CD8-positive, alpha-beta T cell (primary cell): ENCODE measurements at regions of chr19 and their contacts with region 1.

Region 1: DNA sequence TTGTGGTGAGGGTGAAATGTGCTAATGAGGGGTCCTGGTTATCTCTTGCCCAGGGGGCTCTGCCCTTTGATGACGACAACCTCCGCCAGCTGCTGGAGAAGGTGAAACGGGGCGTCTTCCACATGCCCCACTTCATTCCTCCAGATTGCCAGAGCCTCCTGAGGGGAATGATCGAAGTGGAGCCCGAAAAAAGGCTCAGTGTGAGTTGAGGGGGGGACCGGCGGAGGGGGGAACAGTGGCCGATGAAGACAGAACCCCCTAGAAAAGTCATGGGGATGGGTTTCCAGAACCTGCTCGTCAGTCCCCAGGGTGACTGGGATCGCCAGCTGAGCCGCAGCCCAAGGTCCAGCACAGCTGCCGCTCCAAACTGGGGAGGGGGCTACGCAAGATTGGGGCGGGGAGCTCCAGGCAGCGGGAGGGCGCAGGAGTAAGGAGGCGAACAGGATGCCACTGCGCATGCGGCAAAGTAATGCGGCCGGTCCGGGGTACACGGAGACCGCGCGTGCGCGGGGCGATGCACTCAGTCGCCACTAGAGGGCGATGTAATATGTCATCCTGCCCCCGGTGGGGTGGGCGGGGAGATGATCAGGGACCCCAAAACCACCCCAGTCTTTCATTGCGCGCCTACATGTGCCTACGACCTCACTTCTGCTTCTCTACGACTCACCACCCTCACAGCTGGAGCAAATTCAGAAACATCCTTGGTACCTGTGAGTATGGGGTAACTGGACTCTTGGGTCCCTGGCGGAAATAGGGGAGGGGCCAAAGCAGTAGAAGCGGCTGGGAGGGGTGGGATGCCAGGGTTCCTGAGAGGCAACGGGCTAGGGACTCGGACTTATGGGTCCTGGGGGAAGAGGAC is 17.9 kb downstream of the BRSK1 start:
- DNase-seq: peak; percentile 89 to 99 (median 94)
- ATAC-seq: peak; percentile 88
- H3K4me3 ChIP-seq: peak overlapping the region; percentile 46 to 83
- H3K4me3 Mint-ChIP-seq: peak overlapping the region; percentile 85
- H3K27ac ChIP-seq: peak overlapping the region; percentile 48 to 54
- H3K27ac Mint-ChIP-seq: peak overlapping the region; percentile 92
- H3K4me1 ChIP-seq: peaks cover 11% of the 10 kb centered on the region
- H3K4me1 Mint-ChIP-seq: peaks cover 12% of the 10 kb centered on the region
- H3K27me3 ChIP-seq: no peaks in the 10 kb centered on the region
- H3K27me3 Mint-ChIP-seq: no peaks in the 10 kb centered on the region
- CTCF ChIP-seq: peak; percentile 89

Region 2: DNA sequence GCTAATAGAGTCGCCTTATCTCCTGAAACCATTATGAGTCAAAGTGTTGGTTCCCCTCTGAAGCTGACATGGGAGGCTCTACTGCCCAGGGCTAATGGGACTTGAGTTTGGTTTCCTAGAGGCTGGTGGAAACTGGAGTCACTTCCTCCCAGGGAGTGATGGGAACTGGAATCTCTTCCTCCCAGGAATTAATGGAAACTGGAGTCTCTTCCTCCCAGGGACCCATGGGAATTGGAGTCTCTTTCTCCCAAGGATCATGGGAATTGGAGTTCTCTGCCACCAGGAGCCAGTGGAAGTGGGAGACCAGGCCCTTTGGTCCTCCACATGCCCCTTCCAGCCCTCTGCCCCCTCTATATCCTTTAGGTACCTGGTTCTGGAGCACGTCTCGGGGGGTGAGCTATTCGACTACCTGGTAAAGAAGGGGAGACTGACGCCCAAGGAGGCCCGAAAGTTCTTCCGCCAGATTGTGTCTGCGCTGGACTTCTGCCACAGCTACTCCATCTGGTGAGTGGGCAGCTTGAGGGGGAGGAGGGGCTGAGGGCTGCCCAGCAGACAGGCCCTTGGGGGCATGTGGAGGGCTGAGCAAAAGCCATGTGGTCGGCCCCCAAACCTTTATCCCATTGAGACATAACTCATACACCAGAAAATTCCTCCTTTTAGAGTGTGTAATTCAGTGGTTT is 12.4 kb before region 1 on chr19:
- CTCF ChIA-PET with region 1: interaction called, 32 read pairs
- POLR2A ChIA-PET with region 1: no interaction called
- intact Hi-C with region 1: no loop called
- DNase-seq: no peak
- ATAC-seq: no peak
- H3K4me3 ChIP-seq: no peak overlapping the region
- H3K4me3 Mint-ChIP-seq: no peak overlapping the region
- H3K27ac ChIP-seq: no peak overlapping the region
- H3K27ac Mint-ChIP-seq: no peak overlapping the region
- H3K4me1 ChIP-seq: peaks cover 4% of the 10 kb centered on the region
- H3K4me1 Mint-ChIP-seq: peaks cover 6% of the 10 kb centered on the region
- H3K27me3 ChIP-seq: no peaks in the 10 kb centered on the region
- H3K27me3 Mint-ChIP-seq: no peaks in the 10 kb centered on the region
- CTCF ChIP-seq: no peak

Region 3: DNA sequence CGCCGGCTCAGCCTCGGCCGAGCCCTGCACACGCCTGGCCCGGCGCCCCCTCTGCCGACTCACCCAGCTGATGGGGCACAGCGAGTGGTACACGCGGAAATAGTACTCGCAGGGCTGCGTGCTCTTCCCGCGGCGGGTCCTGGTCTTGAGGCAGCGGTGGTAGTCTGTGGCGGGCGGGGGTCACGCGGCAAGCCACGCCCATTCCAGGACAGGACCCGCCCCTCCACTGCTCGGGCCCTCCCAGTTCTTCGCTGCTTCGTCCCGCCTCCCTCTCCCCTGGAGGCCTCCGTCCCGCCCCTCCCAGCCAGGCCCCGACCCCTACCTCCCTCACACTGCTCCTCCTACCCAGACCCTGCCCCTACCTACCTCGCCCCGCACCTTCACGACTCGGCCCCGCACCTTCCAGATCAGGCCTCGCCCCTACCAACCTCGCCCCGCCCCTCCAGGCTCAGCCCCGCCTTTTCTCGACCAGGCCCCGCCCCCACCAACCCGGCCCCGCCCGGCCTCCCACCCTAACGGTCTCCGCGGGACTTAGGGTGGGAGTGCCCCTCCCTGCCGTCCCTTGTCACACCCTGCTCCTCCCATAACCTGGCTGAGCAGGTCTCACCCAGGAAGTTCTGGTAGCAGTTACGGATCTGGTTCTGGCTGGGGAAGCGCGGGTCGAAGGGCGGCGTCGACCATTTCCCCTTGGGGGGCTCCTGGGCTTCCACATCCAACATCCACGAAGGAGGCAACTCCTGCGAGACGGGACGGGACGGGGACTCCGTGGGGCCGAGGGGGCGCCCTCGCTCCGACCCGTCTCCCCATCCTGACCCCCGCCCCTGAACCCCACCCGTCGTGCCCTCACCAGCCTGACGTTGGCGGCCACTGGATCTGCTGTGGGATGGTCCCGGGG is 52.4 kb after region 1 on chr19:
- CTCF ChIA-PET with region 1: interaction called, 6 read pairs
- POLR2A ChIA-PET with region 1: no interaction called
- intact Hi-C with region 1: loop called (anchors 1 to 5 kb)
- DNase-seq: peak; percentile 27 to 83 (median 65)
- ATAC-seq: peak; percentile 89
- H3K4me3 ChIP-seq: peak overlapping the region; percentile 32 to 48
- H3K4me3 Mint-ChIP-seq: peak overlapping the region; percentile 75
- H3K27ac ChIP-seq: no peak overlapping the region
- H3K27ac Mint-ChIP-seq: no peak overlapping the region
- H3K4me1 ChIP-seq: peaks cover 20% of the 10 kb centered on the region
- H3K4me1 Mint-ChIP-seq: peaks cover 20% of the 10 kb centered on the region
- H3K27me3 ChIP-seq: peaks cover 26 to 34% of the 10 kb centered on the region in 2 experiments
- H3K27me3 Mint-ChIP-seq: peaks cover 32% of the 10 kb centered on the region
- CTCF ChIP-seq: no peak

Region 4: DNA sequence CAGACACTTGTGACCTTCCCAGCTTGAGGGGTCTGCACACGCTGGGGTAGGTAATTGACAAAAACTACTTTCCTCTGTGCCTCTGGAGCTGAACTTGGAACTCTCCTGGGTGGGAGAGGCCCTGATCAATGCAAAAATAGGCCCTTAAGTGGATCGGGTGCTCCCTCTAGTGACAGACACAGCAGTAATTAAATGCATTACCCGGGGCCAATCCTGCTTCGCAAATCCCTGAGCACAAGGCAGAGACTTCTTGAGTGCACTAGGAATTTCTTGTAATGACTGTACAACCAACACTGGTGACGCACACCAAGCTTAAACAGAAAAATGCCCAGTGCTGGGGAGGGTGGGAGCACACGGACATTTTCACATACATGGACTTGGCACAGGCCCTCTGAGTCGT is 116.5 kb after region 1 on chr19:
- CTCF ChIA-PET with region 1: interaction called, 19 read pairs
- POLR2A ChIA-PET with region 1: no interaction called
- intact Hi-C with region 1: loop called (anchors 1 kb)
- DNase-seq: peak in 8 of 9 experiments; percentile 25 to 78 (median 54)
- ATAC-seq: peak; percentile 54
- H3K4me3 ChIP-seq: no peak overlapping the region
- H3K4me3 Mint-ChIP-seq: no peak overlapping the region
- H3K27ac ChIP-seq: no peak overlapping the region
- H3K27ac Mint-ChIP-seq: no peak overlapping the region
- H3K4me1 ChIP-seq: peaks cover 18% of the 10 kb centered on the region
- H3K4me1 Mint-ChIP-seq: peaks cover 23% of the 10 kb centered on the region
- H3K27me3 ChIP-seq: no peaks in the 10 kb centered on the region
- H3K27me3 Mint-ChIP-seq: no peaks in the 10 kb centered on the region
- CTCF ChIP-seq: peak; percentile 68